Activated CD4-positive, alpha-beta T cell treated with anti-CD3 and anti-CD28 coated beads, Interleukin-2, amount 10 ng/mL, durations not matched to agents 24 days and 14 days (primary cell): ENCODE measurements at regions of chr3 and their contacts with region 1.

Region 1: GRCh38 chr3:71006810-71007785 is 576.4 kb downstream of the FOXP1 start:
- DNase-seq: no peak
- H3K4me3 Mint-ChIP-seq: no peak overlapping the region
- H3K27ac Mint-ChIP-seq: peak overlapping the region; percentile 12
- H3K4me1 Mint-ChIP-seq: peaks cover 54% of the 10 kb centered on the region
- H3K27me3 Mint-ChIP-seq: no peaks in the 10 kb centered on the region

Region 2: DNA sequence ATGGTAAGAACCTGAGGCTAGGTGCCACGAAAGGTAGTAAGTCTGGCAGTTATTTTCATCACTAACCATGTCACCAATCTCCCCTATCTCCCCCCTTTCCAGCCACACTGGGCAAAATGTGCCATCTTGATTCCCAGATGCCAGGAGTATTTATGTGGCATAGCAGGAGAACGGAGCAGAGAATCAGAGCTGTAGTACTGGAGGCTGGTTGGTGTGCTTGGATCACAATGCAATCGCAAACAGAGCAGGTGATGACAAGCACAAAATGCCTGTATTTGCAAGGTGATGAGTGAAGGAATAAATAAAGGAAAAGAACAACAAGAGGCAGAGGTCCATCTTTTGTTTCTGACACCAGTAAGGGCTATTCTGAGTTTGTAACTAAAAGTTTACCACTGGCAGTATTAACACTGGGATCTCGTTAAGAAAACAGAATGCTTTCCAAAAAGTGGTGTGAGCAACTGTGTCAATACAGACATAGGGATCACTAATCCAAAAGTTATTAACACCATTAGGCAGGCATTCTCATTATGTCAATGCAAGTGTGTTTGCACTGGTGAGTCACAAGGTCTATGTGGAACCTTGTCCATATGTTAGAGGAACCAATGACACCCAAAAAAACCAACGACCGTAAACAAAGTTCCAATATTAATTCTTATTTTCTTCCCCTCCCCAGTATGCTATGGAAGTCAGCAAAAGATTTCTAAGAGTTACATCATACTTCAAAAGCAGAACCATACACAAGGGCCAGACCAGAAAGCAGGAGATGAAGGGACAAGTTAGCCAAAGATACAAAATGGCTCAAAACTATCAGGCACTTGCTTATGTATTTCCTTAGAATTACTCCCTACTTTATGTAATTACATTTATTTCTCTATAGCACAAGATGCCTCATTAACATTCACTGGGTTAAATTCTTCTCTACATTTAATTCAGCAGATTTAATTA is 19.8 kb after region 1 on chr3:
- intact Hi-C with region 1: loop called (anchors 2 kb)
- DNase-seq: no peak
- H3K4me3 Mint-ChIP-seq: no peak overlapping the region
- H3K27ac Mint-ChIP-seq: peak overlapping the region; percentile 56
- H3K4me1 Mint-ChIP-seq: peaks cover 42% of the 10 kb centered on the region
- H3K27me3 Mint-ChIP-seq: no peaks in the 10 kb centered on the region

Region 3: GRCh38 chr3:71064288-71064955 is 57.3 kb after region 1 on chr3:
- intact Hi-C with region 1: loop called (anchors 1 kb)
- DNase-seq: peak; percentile 92
- H3K4me3 Mint-ChIP-seq: no peak overlapping the region
- H3K27ac Mint-ChIP-seq: no peak overlapping the region
- H3K4me1 Mint-ChIP-seq: peaks cover 55% of the 10 kb centered on the region
- H3K27me3 Mint-ChIP-seq: no peaks in the 10 kb centered on the region

Region 4: DNA sequence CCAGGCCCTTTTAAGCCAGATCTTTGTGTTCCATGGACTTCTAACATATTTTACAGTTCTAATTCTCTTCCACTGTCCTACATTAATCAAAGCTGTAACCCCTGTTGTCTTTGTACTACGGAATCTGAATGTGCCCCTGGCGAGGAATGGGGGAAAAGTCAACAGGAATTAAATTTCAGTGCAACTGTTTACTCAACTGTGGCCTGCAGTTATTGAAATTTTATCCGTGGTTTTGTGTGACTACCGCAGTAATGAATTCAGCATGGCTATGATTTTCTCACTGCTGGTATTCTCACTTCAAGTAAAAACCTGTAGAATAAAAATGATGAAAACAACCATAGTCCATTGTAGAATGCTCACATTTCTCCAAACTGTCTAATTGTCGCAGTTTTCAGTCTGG is 188.4 kb after region 1 on chr3:
- intact Hi-C with region 1: loop called (anchors 2 kb)
- DNase-seq: no peak
- H3K4me3 Mint-ChIP-seq: no peak overlapping the region
- H3K27ac Mint-ChIP-seq: no peak overlapping the region
- H3K4me1 Mint-ChIP-seq: peaks cover 25% of the 10 kb centered on the region
- H3K27me3 Mint-ChIP-seq: no peaks in the 10 kb centered on the region

Region 5: DNA sequence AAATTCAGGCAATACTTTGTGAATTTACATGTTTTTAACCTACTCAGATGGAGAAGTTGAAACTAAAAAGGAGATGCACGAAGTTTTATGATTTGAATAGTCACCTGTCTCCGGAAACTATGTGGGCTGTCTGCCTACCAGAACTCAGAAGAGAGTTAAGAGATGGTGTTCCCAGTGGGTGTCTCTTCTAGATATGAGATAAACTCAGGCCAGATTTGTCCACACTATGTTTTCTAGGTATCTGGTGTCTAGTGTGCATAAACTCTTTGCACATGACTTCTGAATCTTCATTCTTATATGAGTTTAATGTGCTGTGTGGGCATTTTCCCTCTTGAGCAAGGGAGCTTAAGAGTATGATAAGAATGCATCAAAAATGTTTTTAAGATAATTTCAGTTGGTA is 353.7 kb after region 1 on chr3:
- intact Hi-C with region 1: loop called (anchors 1 kb)
- DNase-seq: no peak
- H3K4me3 Mint-ChIP-seq: peak overlapping the region; percentile 23
- H3K27ac Mint-ChIP-seq: peak overlapping the region; percentile 89
- H3K4me1 Mint-ChIP-seq: peaks cover 25% of the 10 kb centered on the region
- H3K27me3 Mint-ChIP-seq: peaks cover 19% of the 10 kb centered on the region

Region 6: GRCh38 chr3:71444028-71444860 is 437.1 kb after region 1 on chr3:
- intact Hi-C with region 1: loop called (anchors 5 kb)
- DNase-seq: peak; percentile 93
- H3K4me3 Mint-ChIP-seq: peak overlapping the region; percentile 76
- H3K27ac Mint-ChIP-seq: peak overlapping the region; percentile 99
- H3K4me1 Mint-ChIP-seq: peaks cover 80% of the 10 kb centered on the region
- H3K27me3 Mint-ChIP-seq: no peaks in the 10 kb centered on the region

Region 7: DNA sequence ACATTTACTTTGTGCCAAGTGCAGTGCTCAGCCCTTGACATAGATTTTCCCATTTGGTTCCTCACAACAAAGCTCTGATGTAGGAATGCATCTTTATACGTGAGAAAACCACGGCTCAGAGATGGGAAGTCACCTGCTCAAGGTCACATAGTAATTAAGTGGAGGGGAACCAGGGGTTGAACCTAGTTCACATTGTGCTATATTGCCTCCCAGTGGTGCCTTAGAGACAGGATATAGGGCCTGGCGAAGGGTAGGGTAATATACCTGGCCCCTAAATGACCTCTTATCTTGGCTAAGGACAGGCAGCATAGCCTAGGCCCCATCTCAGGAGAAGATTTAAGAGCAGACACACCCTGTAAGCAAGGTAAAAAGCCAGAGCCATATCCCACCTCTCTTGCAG is 504.9 kb after region 1 on chr3:
- intact Hi-C with region 1: loop called (anchors 5 kb)
- DNase-seq: peak; percentile 81
- H3K4me3 Mint-ChIP-seq: no peak overlapping the region
- H3K27ac Mint-ChIP-seq: no peak overlapping the region
- H3K4me1 Mint-ChIP-seq: peaks cover 12% of the 10 kb centered on the region
- H3K27me3 Mint-ChIP-seq: peaks cover 1% of the 10 kb centered on the region